Right lobe of liver (tissue), 6 donors: ENCODE measurements at regions of chr18 and their contacts with region 1.

Region 1: GRCh38 chr18:3710712-3711269 is 260.8 kb downstream of the TGIF1 start:
- DNase-seq: peak; percentile 68 to 79 (median 75)
- ATAC-seq: peak; percentile 80 to 94 (median 90)
- H3K4me3 ChIP-seq: no peak overlapping the region
- H3K27ac ChIP-seq: peak overlapping the region in 2 of 3 donors; percentile 35 to 36
- H3K4me1 ChIP-seq: peaks cover 0 to 10% (median 0%) of the 10 kb centered on the region in 4 donors
- H3K27me3 ChIP-seq: no peaks in the 10 kb centered on the region
- CTCF ChIP-seq: no peak
- POLR2A ChIP-seq: no peak

Region 2: DNA sequence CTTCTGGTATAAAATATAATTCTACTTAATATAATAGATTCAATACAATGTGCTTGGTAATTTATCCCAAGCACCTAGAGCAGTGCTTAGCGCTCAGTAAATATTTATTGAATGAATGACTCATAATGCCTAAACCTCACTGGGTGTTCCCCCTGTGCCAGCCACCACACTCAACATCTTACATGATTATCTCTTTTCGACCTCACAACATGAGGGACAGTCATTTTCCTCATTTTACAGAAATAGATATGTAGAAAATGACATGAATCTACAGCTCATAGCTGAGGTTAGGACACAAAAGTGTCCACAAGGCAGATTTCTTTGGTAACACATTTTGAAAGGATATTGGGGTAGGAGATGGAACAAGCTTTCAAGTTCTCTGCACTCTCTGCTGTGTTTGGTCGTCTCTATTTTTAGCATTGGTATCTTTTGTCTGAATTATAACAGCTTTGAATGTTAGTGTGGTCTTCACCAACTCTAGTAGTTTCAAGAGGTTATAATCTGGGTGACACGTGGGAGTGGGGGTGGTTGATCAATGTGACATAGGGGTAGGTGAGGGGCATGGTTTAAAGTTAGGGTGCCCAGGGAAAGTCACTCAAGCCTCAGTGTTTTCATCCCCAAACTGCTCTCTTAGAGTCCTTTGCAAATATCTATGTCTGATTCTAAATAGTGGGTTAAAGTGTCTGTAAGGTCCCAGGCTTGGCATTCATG is 500.8 kb before region 1 on chr18:
- intact Hi-C with region 1: no loop called
- DNase-seq: no peak
- ATAC-seq: peak; percentile 9 to 56 (median 38)
- H3K4me3 ChIP-seq: no peak overlapping the region
- H3K27ac ChIP-seq: no peak overlapping the region
- H3K4me1 ChIP-seq: peaks cover 0 to 27% (median 4%) of the 10 kb centered on the region in 4 donors
- H3K27me3 ChIP-seq: no peaks in the 10 kb centered on the region
- CTCF ChIP-seq: no peak
- POLR2A ChIP-seq: no peak

Region 3: GRCh38 chr18:3623769-3624545 is 86.8 kb before region 1 on chr18:
- intact Hi-C with region 1: no loop called
- DNase-seq: peak; percentile 90 to 96 (median 95)
- ATAC-seq: peak; percentile 85 to 99 (median 96)
- H3K4me3 ChIP-seq: peak overlapping the region in 1 of 3 donors; percentile 36
- H3K27ac ChIP-seq: peak overlapping the region; percentile 86 to 92 (median 87)
- H3K4me1 ChIP-seq: peaks cover 0 to 37% (median 9%) of the 10 kb centered on the region in 4 donors
- H3K27me3 ChIP-seq: no peaks in the 10 kb centered on the region
- CTCF ChIP-seq: no peak
- POLR2A ChIP-seq: peak; percentile 86

Region 4: DNA sequence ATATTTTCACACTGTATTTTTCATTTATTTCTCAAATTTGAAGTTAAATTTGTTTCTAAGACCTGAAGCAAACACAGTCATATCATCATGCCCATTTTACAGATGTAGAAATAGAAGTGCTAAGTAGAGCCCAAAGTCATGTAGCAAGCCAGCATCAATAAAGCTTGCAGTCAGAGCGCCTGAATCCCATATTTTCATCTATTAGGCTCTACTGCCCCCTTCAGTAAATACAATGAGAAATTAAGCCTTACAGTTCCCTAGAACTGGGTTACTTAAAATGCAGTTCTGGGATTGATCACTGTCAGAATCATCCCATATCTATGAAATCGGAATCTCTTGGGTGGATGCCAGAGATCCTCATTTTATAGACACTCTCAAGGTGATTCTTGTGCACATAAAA is 159.1 kb after region 1 on chr18:
- intact Hi-C with region 1: loop called in 1 of 2 experiments (anchors 5 kb)
- DNase-seq: no peak
- ATAC-seq: peak; percentile 85 to 94 (median 86)
- H3K4me3 ChIP-seq: no peak overlapping the region
- H3K27ac ChIP-seq: no peak overlapping the region
- H3K4me1 ChIP-seq: no peaks in the 10 kb centered on the region
- H3K27me3 ChIP-seq: no peaks in the 10 kb centered on the region
- CTCF ChIP-seq: peak; percentile 37 to 75 (median 47)
- POLR2A ChIP-seq: no peak